Heart left ventricle (tissue), 16 donors: ENCODE measurements at regions of chr3 and their contacts with region 1.

Region 1: DNA sequence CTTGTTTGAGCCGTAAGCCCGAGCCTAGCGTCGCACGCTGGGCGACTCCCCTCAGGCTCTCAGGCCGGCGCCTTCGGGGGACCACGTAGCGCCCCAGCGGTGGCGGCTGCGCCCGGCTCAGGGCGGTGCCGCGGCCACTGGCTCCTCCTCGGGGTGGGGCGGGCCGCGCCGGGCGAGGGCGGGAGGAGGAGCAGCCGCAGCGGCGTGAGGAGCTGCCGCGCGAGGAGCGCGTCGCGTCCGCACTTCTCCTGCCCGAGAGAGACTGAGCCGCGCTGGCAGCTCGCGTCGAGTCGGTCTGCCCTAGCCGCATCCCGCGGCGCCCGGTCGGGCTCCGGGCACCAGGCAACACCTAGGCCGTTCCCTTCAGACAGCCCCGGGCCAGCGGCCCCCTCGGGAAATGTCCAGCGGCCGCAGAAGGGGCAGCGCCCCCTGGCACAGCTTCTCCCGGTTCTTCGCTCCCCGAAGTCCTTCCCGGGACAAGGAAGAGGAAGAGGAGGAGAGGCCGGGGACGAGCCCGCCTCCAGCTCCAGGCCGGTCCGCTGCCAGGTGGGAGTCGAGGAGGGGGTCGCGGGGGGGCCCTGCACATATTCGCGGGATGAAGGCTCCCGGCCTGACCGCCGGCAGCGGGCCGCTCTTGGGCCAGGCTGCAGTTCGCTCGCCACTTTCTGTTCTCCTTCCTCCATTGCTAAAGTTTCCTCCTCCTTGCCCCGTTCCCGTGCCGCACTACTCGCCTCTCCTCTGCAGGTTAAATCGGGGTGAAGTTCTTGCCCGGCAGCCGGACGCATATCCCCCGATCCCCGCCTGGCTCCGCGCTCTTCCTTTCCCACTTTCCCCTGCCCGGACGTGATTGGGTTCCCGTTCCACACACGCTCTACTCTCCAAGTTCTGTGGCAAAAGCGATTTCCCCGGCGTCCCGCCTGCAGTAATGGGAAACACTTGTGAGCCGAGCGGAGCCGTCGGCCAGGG is at the start of gene CRYBG3:
- DNase-seq: peak; percentile 87 to 94 (median 89)
- ATAC-seq: peak; percentile 94 to 99 (median 98)
- H3K4me3 ChIP-seq: peak within 1 kb of the TSS; percentile 72 to 98 (median 84)
- H3K27ac ChIP-seq: peak within 1 kb of the TSS; percentile 83 to 95 (median 91)
- H3K4me1 ChIP-seq: peaks cover 0 to 40% (median 26%) of the 10 kb centered on the region in 12 donors
- H3K27me3 ChIP-seq: no peaks in the 10 kb centered on the region
- CTCF ChIP-seq: peak in 9 of 12 donors; percentile 10 to 58 (median 30)
- POLR2A ChIP-seq: peak; percentile 39 to 93
- total RNA-seq, gene CRYBG3: 18.7 to 34.1 (median 21.4) TPM

Region 2: GRCh38 chr3:97764407-97765238 is 57.5 kb before region 1 on chr3 and contains the start of gene ARL6:
- intact Hi-C with region 1: loop called in 1 of 10 experiments (anchors 5 kb)
- DNase-seq: peak; percentile 79 to 90 (median 82)
- ATAC-seq: peak; percentile 97 to 99 (median 99)
- H3K4me3 ChIP-seq: peak within 1 kb of the TSS; percentile 57 to 89 (median 76)
- H3K27ac ChIP-seq: peak within 1 kb of the TSS in 10 of 12 donors; percentile 26 to 78 (median 54)
- H3K4me1 ChIP-seq: peaks cover 0 to 15% (median 9%) of the 10 kb centered on the region in 12 donors
- H3K27me3 ChIP-seq: no peaks in the 10 kb centered on the region
- CTCF ChIP-seq: no peak
- POLR2A ChIP-seq: peak in 1 of 2 donors; percentile 10
- total RNA-seq, gene ARL6: 2.0 to 6.0 (median 3.9) TPM

Region 3: DNA sequence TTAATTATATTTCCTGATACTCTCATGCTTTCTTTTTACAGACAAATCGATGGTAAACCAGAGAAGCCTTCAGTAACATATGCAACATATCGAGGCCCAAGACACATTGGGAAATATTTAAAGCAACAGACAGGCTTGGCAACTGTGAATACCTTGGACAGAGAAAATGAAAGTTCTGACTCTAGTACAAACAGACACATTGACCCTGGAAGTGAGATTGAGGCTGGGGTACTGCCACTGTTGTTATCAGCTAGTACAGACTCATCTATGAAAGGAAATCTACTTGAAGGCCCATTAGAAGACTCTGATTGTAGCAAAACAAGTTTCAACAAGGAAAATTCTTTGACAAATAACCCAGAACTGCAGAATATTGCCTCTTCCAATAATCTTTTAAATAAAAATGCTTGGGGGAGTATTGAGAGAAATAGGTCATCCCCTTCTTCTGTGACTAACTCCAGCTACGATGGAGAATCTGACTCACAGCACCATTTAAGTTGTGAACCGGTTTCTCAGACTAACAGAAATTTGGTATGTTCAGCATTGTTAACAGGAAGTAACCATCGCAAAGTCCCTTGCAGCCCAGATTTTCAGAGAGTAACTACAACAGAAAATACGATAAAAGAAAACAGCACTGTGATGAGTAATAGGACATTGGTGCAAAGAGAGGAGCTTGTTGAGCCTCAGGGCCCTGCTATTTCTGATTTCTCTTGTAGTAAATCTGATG is 49.9 kb after region 1 on chr3:
- intact Hi-C with region 1: loop called in 2 of 10 experiments (anchors 5 to 10 kb)
- DNase-seq: no peak
- ATAC-seq: peak in 3 of 4 donors; percentile 62 to 83 (median 70)
- H3K4me3 ChIP-seq: no peak overlapping the region
- H3K27ac ChIP-seq: peak overlapping the region in 5 of 12 donors; percentile 0 to 51 (median 24)
- H3K4me1 ChIP-seq: peaks cover 0 to 14% (median 0%) of the 10 kb centered on the region in 12 donors
- H3K27me3 ChIP-seq: no peaks in the 10 kb centered on the region
- CTCF ChIP-seq: no peak
- POLR2A ChIP-seq: no peak

Region 4: DNA sequence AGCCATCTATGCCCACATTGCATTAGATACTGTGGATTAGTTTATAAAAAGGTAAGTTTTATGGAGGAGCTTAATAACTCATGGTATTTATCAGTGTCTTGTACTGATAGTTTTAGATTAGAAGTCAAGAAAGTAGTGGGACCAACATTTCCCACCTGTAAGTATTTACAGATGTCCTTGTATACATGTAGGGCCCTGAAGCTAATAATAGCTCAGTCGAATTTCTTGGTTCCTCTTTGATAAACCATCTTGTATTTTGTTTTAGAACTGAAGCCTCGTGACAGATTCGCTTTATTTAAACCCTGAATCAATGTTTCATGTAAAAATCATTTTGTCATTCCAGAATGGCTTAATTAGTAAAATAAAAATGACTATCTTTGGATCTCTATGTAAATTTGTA is 73.1 kb after region 1 on chr3:
- intact Hi-C with region 1: loop called in 2 of 10 experiments (anchors 5 to 10 kb)
- DNase-seq: no peak
- ATAC-seq: no peak
- H3K4me3 ChIP-seq: no peak overlapping the region
- H3K27ac ChIP-seq: no peak overlapping the region
- H3K4me1 ChIP-seq: peaks cover 0 to 5% (median 0%) of the 10 kb centered on the region in 12 donors
- H3K27me3 ChIP-seq: no peaks in the 10 kb centered on the region
- CTCF ChIP-seq: no peak
- POLR2A ChIP-seq: no peak

Region 5: GRCh38 chr3:97910931-97911351 is 88.8 kb after region 1 on chr3:
- intact Hi-C with region 1: loop called in 1 of 10 experiments (anchors 10 kb)
- DNase-seq: peak in 1 of 5 donors; percentile 24
- ATAC-seq: peak; percentile 44 to 55 (median 49)
- H3K4me3 ChIP-seq: peak overlapping the region in 1 of 12 donors; percentile 34
- H3K27ac ChIP-seq: peak overlapping the region in 7 of 12 donors; percentile 8 to 47 (median 25)
- H3K4me1 ChIP-seq: peaks cover 0 to 10% (median 0%) of the 10 kb centered on the region in 12 donors
- H3K27me3 ChIP-seq: no peaks in the 10 kb centered on the region
- CTCF ChIP-seq: no peak
- POLR2A ChIP-seq: no peak

Region 6: GRCh38 chr3:97971677-97972567 is 149.8 kb after region 1 on chr3 and contains the start of gene RIOX2:
- intact Hi-C with region 1: loop called in 3 of 10 experiments (anchors 5 kb)
- DNase-seq: peak; percentile 73 to 88 (median 80)
- ATAC-seq: peak; percentile 80 to 99 (median 96)
- H3K4me3 ChIP-seq: peak within 1 kb of the TSS; percentile 72 to 94 (median 81)
- H3K27ac ChIP-seq: peak within 1 kb of the TSS in 11 of 12 donors; percentile 57 to 88 (median 80)
- H3K4me1 ChIP-seq: peaks cover 0 to 25% (median 8%) of the 10 kb centered on the region in 12 donors
- H3K27me3 ChIP-seq: no peaks in the 10 kb centered on the region
- CTCF ChIP-seq: peak in 4 of 12 donors; percentile 14 to 31 (median 26)
- POLR2A ChIP-seq: peak in 1 of 2 donors; percentile 76
- total RNA-seq, gene RIOX2: 10.3 to 15.9 (median 12.1) TPM

Region 7: DNA sequence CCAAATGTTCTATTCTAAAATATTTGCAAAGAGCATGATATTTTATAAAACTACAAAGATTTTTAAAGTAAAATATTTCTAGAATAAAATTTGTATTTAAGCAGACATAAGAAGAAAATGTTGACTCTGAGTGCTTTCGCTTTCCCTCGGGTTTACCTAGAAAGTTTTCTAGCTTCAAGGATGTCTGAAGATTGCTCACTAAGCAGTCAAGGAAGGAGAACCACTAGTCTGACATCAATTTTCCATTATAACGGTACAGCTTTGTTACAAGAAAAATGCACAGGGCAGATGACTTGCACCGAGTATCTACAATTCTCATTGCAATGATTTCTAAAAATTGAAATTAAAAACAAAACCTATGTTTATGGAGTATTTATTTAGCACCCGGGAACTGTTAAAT is 723.8 kb after region 1 on chr3:
- intact Hi-C with region 1: no loop called
- DNase-seq: no peak
- ATAC-seq: no peak
- H3K4me3 ChIP-seq: no peak overlapping the region
- H3K27ac ChIP-seq: no peak overlapping the region
- H3K4me1 ChIP-seq: no peaks in the 10 kb centered on the region
- H3K27me3 ChIP-seq: peaks cover 0 to 9% (median 0%) of the 10 kb centered on the region in 9 donors
- CTCF ChIP-seq: no peak
- POLR2A ChIP-seq: no peak